IMR-90 (cell line): ENCODE measurements at regions of chr3 and their contacts with region 1.

Region 1: DNA sequence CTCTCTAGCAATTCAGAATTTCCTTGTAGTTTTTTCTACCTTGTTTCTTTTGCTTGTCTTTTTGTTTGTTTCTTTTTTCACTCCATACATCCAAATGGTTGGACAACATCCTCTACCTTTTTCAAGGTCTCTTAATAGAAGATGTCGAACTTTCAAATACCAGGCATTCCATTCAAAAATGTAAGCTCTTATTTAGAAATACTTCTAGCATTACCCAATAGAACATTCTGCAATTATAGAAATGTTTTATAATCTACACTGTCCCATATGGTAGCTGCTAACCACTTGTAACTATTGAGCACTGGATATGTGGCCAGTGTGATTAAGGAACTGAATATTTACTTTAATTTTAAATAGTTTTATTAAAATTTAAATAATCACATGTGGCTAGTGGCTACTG is 196.2 kb upstream of the MRPL3 start:
- DNase-seq: no peak
- ATAC-seq: no peak
- H3K4me3 ChIP-seq: no peak overlapping the region
- H3K27ac ChIP-seq: no peak overlapping the region
- H3K4me1 ChIP-seq: no peaks in the 10 kb centered on the region
- H3K27me3 ChIP-seq: no peaks in the 10 kb centered on the region
- CTCF ChIP-seq: no peak
- POLR2A ChIP-seq: no peak
- RAD21 ChIP-seq: no peak

Region 2: DNA sequence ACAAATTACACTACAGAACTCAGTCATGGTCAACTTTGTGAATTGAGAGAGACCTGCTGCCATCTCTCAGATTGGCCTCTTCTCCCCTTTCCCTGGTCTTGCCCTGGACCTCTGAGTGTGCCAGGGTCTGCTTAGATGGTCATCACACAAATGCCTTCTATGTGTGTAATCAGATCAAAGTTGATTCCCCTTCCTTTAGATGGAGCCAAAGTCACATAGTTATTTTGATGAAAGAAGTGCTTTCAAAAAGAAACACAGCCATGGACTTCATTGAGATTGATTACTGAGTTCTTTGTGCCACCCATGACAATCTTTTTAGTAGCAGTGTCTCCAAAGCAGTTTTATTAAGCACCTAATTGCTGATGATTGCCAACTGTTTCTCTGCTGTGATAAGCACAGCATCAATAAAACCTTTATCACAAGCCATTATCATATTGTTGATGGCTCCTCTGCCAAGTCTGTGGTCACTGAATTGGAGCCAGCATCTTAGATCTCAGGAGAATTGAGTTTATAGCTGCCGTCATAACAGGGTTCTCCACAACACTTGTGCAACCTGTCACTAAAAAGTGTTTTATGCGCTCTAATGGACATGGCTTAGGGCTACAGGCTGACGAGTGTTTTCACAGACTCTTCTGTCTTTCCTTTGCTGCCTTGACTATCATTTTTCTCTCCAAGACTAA is 467.2 kb before region 1 on chr3:
- CTCF ChIA-PET with region 1: no interaction called
- POLR2A ChIA-PET with region 1: interaction called, 32 read pairs
- dilution Hi-C with region 1: no loop called
- in situ Hi-C with region 1: no loop called
- intact Hi-C with region 1: no loop called
- DNase-seq: no peak
- ATAC-seq: 0 out of 2 replicates have a peak, but pooled peaks have one; percentile 14
- H3K4me3 ChIP-seq: no peak overlapping the region
- H3K27ac ChIP-seq: no peak overlapping the region
- H3K4me1 ChIP-seq: no peaks in the 10 kb centered on the region
- H3K27me3 ChIP-seq: no peaks in the 10 kb centered on the region
- CTCF ChIP-seq: no peak
- POLR2A ChIP-seq: no peak
- RAD21 ChIP-seq: no peak